Activated naive CD4-positive, alpha-beta T cell treated with anti-CD3 and anti-CD28 coated beads for 36 hours (primary cell): ENCODE measurements at regions of chr3 and their contacts with region 1.

Region 1: GRCh38 chr3:192566706-192567290 is 160.5 kb downstream of the FGF12 start:
- DNase-seq: peak; percentile 85
- H3K4me3 Mint-ChIP-seq: no peak overlapping the region
- H3K27ac Mint-ChIP-seq: no peak overlapping the region
- H3K4me1 Mint-ChIP-seq: peaks cover 8% of the 10 kb centered on the region
- H3K27me3 Mint-ChIP-seq: peaks cover 26% of the 10 kb centered on the region

Region 2: DNA sequence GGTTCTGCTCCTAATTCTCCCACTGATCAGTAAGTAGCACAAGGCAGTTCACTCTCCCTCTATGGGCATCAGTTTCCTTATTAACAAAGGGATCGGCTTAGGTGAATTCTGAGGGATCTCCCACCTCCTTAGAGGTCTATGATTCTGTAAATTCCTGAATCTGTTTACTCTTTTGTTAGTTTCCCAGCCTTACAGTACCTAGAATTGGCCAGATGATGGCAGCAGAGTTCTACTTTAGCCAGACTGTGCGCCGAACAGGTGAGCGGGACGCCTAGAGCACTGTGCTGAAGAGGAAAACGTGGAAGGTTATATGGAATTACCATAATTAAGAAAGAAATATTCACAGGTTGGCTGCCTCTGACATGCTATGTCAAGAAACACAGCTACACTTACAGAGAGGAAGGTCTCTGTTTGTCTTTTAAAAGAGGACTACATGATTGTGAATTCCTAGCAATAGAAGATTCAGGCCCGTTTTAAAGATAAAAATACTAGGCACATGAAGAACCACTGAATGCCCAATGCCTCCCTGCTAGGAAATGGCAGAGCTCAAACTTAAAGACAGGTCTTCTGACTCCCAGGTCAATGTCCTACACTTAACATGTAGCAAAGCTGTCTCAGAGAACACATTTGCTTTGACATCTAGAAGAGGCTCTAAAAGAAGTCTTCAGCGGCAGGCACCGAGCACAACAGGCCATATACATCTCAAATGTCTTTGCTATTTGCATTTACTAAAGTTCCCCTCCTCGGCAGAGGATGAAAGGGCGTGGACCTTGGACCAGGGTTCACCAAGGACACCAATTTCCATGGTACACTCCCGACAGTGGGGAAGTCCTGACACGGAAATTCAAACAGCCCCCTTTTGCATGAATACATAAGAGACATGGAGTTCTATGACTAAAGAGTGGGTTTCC is 99.3 kb before region 1 on chr3:
- CTCF ChIA-PET with region 1: interaction called, 3 read pairs
- intact Hi-C with region 1: loop called (anchors 1 kb)
- DNase-seq: peak; percentile 68
- H3K4me3 Mint-ChIP-seq: no peak overlapping the region
- H3K27ac Mint-ChIP-seq: no peak overlapping the region
- H3K4me1 Mint-ChIP-seq: no peaks in the 10 kb centered on the region
- H3K27me3 Mint-ChIP-seq: peaks cover 16% of the 10 kb centered on the region

Region 3: DNA sequence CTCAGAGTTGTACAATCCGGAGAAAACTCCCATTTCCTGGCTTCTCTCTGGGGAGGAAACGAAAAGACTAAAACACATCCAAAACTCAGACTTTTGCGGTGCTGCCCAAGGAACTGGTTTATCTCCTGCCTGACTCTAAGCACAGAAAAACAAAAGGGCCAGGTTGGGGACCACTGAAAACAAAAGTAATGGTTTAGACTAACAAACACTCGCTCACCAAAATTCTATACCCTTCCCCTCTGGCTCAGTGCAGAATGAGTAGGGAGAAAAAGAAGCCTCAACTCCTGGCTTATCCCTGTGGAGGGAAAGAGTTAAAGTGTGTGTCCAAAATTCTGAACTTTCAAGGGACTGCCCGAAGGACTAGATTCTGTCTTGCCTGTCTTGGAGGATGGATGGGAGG is 13.1 kb before region 1 on chr3:
- CTCF ChIA-PET with region 1: no interaction called
- intact Hi-C with region 1: no loop called
- DNase-seq: no peak
- H3K4me3 Mint-ChIP-seq: no peak overlapping the region
- H3K27ac Mint-ChIP-seq: no peak overlapping the region
- H3K4me1 Mint-ChIP-seq: no peaks in the 10 kb centered on the region
- H3K27me3 Mint-ChIP-seq: peaks cover 7% of the 10 kb centered on the region

Region 4: GRCh38 chr3:192715126-192715525 is 148.3 kb after region 1 on chr3:
- CTCF ChIA-PET with region 1: no interaction called
- intact Hi-C with region 1: no loop called
- DNase-seq: no peak
- H3K4me3 Mint-ChIP-seq: no peak overlapping the region
- H3K27ac Mint-ChIP-seq: no peak overlapping the region
- H3K4me1 Mint-ChIP-seq: no peaks in the 10 kb centered on the region
- H3K27me3 Mint-ChIP-seq: no peaks in the 10 kb centered on the region

Region 5: GRCh38 chr3:192802957-192803899 is 236.4 kb after region 1 on chr3:
- CTCF ChIA-PET with region 1: interaction called, 8 read pairs
- intact Hi-C with region 1: loop called (anchors 1 kb)
- DNase-seq: no peak
- H3K4me3 Mint-ChIP-seq: no peak overlapping the region
- H3K27ac Mint-ChIP-seq: no peak overlapping the region
- H3K4me1 Mint-ChIP-seq: no peaks in the 10 kb centered on the region
- H3K27me3 Mint-ChIP-seq: no peaks in the 10 kb centered on the region

Region 6: GRCh38 chr3:193040836-193041672 is 474.3 kb after region 1 on chr3:
- CTCF ChIA-PET with region 1: no interaction called
- intact Hi-C with region 1: loop called (anchors 1 kb)
- DNase-seq: peak; percentile 9
- H3K4me3 Mint-ChIP-seq: no peak overlapping the region
- H3K27ac Mint-ChIP-seq: no peak overlapping the region
- H3K4me1 Mint-ChIP-seq: no peaks in the 10 kb centered on the region
- H3K27me3 Mint-ChIP-seq: no peaks in the 10 kb centered on the region

Region 7: GRCh38 chr3:193129601-193130000 is 562.8 kb after region 1 on chr3:
- CTCF ChIA-PET with region 1: no interaction called
- intact Hi-C with region 1: loop called (anchors 5 kb)
- DNase-seq: no peak
- H3K4me3 Mint-ChIP-seq: no peak overlapping the region
- H3K27ac Mint-ChIP-seq: no peak overlapping the region
- H3K4me1 Mint-ChIP-seq: no peaks in the 10 kb centered on the region
- H3K27me3 Mint-ChIP-seq: peaks cover 10% of the 10 kb centered on the region

Region 8: DNA sequence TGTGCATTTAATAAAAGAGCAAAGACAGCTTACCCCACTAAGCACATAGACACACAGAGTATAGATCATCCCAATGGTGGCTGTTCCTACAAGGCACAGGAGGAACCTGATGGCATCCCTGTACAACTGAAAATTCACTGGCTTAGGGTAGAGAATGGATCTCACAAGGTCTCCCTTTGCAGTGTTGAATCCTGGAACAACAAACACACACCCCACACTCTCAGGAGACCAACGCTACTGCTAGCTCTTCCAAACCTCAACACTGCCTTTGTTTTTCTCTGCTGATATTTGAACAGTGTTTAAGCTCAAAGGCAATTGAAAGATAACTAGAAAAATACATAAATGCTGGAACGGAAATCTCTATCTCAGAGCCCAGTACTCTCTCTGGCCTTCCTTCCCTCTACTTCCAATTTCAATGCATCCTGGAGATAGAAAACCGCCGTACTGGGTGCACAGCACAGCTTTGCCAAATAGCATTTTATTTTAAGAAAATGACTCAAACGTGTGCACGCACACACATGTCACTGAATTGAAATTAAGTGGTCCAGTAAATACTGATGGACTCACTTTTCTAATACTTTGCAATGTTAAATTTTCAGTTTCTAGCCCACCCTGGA is 899.3 kb after region 1 on chr3:
- CTCF ChIA-PET with region 1: no interaction called
- intact Hi-C with region 1: loop called (anchors 5 kb)
- DNase-seq: no peak
- H3K4me3 Mint-ChIP-seq: no peak overlapping the region
- H3K27ac Mint-ChIP-seq: no peak overlapping the region
- H3K4me1 Mint-ChIP-seq: no peaks in the 10 kb centered on the region
- H3K27me3 Mint-ChIP-seq: no peaks in the 10 kb centered on the region

Region 9: DNA sequence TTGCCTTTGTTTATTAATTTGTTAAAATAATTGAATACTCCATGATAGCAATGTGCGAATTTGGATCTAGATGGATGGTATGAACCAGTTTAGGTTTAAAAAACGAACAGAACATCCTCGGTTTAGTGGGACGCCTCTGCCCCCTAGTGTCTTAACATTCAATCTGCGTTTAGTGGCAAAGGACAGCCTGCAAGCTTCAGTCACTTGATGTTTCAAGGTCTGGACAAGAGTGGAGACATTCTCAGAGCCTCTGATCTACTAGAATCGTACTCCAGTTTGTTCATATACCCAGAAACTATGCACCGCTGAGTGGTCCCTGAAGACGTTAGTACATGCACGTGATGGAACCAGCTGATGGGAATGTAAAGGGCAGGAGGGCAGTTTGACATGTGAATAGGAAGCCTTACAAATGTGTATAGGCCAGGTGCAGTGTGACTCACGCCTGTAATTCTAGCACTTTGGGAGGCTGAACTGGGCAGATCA is 1005.7 kb after region 1 on chr3:
- CTCF ChIA-PET with region 1: interaction called, 4 read pairs
- intact Hi-C with region 1: loop called (anchors 1 kb)
- DNase-seq: peak; percentile 69
- H3K4me3 Mint-ChIP-seq: no peak overlapping the region
- H3K27ac Mint-ChIP-seq: no peak overlapping the region
- H3K4me1 Mint-ChIP-seq: no peaks in the 10 kb centered on the region
- H3K27me3 Mint-ChIP-seq: no peaks in the 10 kb centered on the region